Activated CD8-positive, alpha-beta T cell treated with anti-CD3 and anti-CD28 coated beads for 36 hours (primary cell): ENCODE measurements at regions of chr4 and their contacts with region 1.

Region 1: GRCh38 chr4:7843831-7844593 is 95.6 kb downstream of the AFAP1 start:
- DNase-seq: peak; percentile 87
- ATAC-seq: peak; percentile 95
- H3K4me3 Mint-ChIP-seq: no peak overlapping the region
- H3K27ac Mint-ChIP-seq: no peak overlapping the region
- H3K4me1 Mint-ChIP-seq: peaks cover 30% of the 10 kb centered on the region
- H3K27me3 Mint-ChIP-seq: no peaks in the 10 kb centered on the region
- CTCF ChIP-seq: peak; percentile 59

Region 2: GRCh38 chr4:7487502-7487901 is 356.5 kb before region 1 on chr4:
- CTCF ChIA-PET with region 1: no interaction called
- POLR2A ChIA-PET with region 1: no interaction called
- intact Hi-C with region 1: no loop called
- DNase-seq: no peak
- ATAC-seq: no peak
- H3K4me3 Mint-ChIP-seq: no peak overlapping the region
- H3K27ac Mint-ChIP-seq: no peak overlapping the region
- H3K4me1 Mint-ChIP-seq: no peaks in the 10 kb centered on the region
- H3K27me3 Mint-ChIP-seq: peaks cover 3% of the 10 kb centered on the region
- CTCF ChIP-seq: no peak

Region 3: DNA sequence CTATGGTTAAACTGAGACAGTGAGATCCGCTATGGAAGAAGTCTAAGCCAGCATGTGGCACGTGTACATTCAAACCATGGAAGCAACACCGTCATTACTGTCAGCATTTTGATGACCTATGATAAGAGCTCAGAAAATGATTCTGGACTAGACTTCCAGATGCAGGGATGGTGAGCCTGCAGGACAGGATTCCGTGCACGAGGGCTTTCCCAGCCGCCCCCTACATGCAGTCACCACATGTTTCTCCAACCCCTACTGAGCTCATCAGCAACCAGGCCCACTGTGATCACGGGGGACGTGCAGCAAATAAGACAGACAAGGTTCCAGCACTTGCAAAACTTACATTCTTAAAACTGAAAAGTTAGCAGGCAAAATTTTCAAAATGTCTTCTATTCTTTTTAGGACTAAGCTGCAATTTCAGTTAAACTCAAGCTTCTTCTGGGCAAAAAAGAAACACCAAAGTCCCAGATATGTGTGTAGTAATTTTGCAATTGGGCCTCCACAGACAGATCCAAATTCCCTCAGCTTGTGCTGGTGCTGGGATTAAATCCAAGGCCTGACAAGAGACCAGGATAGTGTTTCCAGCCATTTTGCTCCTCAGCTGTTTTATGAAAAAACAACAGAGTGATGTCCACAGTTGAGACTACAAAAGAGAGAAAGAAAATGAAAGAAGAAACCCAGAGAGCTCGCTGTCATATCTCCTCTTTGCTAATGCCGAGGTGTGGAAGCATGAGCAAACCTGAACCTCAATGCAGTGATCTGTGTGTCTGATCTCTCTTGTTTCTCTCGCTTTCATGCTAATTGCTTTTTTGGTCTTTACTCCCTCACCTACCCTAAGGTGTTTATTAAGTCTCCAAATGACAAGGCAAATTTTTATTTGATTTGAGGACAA is 22.5 kb before region 1 on chr4:
- CTCF ChIA-PET with region 1: interaction called, 11 read pairs
- POLR2A ChIA-PET with region 1: no interaction called
- intact Hi-C with region 1: no loop called
- DNase-seq: no peak
- ATAC-seq: peak; percentile 7
- H3K4me3 Mint-ChIP-seq: no peak overlapping the region
- H3K27ac Mint-ChIP-seq: no peak overlapping the region
- H3K4me1 Mint-ChIP-seq: peaks cover under 1% of the 10 kb centered on the region
- H3K27me3 Mint-ChIP-seq: peaks cover 2% of the 10 kb centered on the region
- CTCF ChIP-seq: no peak

Region 4: DNA sequence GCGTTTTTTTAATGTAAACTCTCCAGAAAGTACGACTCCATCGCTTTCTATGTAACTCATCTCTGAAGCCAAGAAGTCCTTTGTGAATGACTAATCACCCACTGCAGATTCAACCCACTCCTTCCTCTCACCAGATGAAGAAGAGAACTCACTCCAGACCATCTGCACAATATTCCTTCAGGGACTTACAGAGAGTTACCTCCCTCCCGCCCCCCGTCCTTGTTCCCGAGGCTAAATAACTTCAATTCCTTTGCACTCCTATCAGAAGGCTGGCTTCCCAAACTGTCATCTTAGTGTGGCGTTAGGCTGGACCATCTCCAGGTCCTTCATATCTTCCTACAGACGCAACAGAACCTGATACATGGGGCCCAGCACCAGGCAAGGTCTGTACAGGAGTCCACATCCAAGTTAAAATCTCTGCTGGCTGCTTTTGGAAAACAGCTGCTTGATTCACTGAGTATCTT is 13.3 kb after region 1 on chr4:
- CTCF ChIA-PET with region 1: interaction called, 11 read pairs
- POLR2A ChIA-PET with region 1: interaction called, 4 read pairs
- intact Hi-C with region 1: no loop called
- DNase-seq: no peak
- ATAC-seq: peak; percentile 45
- H3K4me3 Mint-ChIP-seq: peak overlapping the region; percentile 30
- H3K27ac Mint-ChIP-seq: peak overlapping the region; percentile 85
- H3K4me1 Mint-ChIP-seq: peaks cover 60% of the 10 kb centered on the region
- H3K27me3 Mint-ChIP-seq: no peaks in the 10 kb centered on the region
- CTCF ChIP-seq: no peak